ENCODE measurements at regions of chr5 and their contacts with region 1.

Region 1: DNA sequence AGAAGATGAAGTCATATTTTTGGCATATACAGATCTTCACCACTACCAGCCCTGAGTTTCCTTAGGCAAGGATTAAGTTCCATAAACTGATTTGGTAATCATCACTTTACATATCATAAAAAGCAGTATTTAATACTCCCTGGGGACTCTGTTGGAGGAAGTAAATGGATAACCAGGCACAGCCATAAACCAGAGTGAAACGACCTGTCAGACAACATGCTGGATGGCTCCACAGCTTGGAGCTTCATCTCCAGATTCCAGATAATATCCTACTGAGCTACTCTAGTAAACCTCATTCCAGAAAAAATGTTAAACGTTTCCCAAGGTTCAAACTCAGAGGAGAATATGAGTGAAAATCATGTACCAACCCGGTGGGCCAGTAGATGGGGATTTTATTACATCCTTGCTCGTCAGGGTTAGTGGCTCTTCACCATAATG is 109.2 kb downstream of the BASP1 start:
- DNase-seq: no peak
- ATAC-seq: no peak
- H3K4me3 Mint-ChIP-seq: no peak overlapping the region
- H3K27ac Mint-ChIP-seq: no peak overlapping the region
- H3K4me1 Mint-ChIP-seq: no peaks in the 10 kb centered on the region
- H3K27me3 Mint-ChIP-seq: no peaks in the 10 kb centered on the region
- CTCF ChIP-seq: no peak

Region 2: DNA sequence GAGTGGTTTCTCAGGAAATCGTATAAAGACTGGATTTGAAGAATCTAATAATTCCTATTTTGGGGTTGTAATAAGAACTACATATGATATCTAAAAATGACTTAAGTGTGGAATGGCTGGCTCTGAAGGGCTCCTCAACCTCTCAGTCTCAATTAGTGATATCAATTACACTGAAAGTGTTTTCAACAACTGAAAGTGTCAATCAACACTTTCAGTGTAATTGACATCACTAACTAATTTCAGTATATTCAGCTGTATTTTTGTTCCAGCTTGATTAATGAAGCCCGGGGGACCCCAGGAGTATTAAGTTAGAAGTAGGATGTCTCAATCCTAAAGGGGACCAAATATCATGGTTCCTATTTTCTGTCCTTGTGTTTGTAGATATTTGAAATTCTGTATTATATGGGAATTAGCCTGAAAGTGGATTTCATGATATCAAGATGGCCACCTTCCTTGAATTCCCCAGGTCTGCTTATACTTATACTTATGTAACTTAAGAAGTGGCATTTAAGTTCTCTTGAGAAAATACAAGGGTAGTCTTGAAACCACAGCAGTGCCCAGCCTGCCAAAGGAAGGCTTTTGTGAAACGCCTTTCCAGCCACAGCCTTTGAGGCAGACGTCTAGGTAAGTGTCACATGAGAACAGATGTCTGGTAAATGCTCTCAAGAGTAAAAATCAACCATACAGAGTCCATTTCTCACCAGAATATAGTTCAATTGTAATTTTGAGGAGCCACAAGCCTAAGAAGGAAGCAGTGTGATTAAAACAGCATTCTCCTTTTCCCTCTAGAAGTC is 104.6 kb before region 1 on chr5:
- CTCF ChIA-PET with region 1: no interaction called
- POLR2A ChIA-PET with region 1: interaction called, 10 read pairs
- intact Hi-C with region 1: no loop called
- DNase-seq: no peak
- ATAC-seq: no peak
- H3K4me3 Mint-ChIP-seq: peak overlapping the region; percentile 73
- H3K27ac Mint-ChIP-seq: peak overlapping the region; percentile 77
- H3K4me1 Mint-ChIP-seq: peaks cover 80% of the 10 kb centered on the region
- H3K27me3 Mint-ChIP-seq: no peaks in the 10 kb centered on the region
- CTCF ChIP-seq: no peak

Region 3: DNA sequence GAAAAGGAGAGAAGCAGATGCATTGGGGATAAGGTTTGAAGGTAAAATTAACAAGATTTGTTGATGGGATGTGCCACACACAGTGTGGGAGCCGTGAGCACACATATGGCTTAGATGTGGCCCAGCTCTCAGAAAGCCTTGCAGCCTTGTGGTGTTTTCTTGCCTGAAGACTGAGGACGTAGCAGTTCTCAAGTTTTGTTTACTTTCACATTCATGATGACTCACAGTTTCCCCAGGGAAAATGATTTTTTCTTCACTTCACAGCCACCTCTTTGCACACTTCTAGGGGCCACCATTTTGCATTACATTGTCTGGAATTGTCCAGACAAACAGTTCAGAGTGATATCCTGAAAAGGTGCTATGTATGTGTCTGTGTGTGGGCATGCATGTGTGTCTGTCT is 17.1 kb after region 1 on chr5:
- CTCF ChIA-PET with region 1: no interaction called
- POLR2A ChIA-PET with region 1: no interaction called
- intact Hi-C with region 1: loop called (anchors 2 kb)
- DNase-seq: no peak
- ATAC-seq: peak; percentile 91
- H3K4me3 Mint-ChIP-seq: no peak overlapping the region
- H3K27ac Mint-ChIP-seq: peak overlapping the region; percentile 27
- H3K4me1 Mint-ChIP-seq: peaks cover 12% of the 10 kb centered on the region
- H3K27me3 Mint-ChIP-seq: no peaks in the 10 kb centered on the region
- CTCF ChIP-seq: no peak

Measured in activated B cell treated with CpG ODN at 0.5 μM for 24 hours (primary cell).